Natural killer cell (primary cell): ENCODE measurements at regions of chr2 and their contacts with region 1.

Region 1: DNA sequence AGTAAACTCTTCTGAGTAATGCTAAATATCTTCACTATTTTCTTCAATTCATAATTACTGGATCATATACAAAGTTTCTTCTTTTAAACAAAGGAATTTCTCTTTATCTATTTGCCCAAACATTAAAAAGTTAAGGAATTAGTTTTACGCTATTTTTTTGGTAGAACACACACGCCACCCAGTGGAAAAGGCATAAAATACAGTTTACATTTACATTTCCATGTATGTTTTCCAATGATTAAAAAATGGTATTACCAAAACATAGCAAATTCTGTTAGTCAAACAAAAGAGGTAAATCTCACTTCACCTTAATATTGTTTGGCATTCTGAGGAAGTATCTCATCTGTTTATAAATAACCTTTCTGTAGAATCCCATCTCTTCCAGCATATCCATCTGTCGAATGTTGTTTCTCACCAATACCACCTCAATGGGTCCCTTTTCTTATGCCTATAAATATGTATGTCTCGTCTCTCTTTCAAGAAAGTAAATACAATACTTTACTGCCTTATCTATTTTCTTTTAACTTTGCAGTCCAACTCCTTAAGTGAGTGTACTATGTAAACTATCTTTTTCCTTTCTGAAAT is 7.2 kb downstream of the BOLL start:
- DNase-seq: peak in 1 of 2 donors; percentile 64
- ATAC-seq: no peak
- H3K4me3 ChIP-seq: no peak overlapping the region
- H3K4me3 Mint-ChIP-seq: no peak overlapping the region
- H3K27ac ChIP-seq: no peak overlapping the region
- H3K27ac Mint-ChIP-seq: no peak overlapping the region
- H3K4me1 ChIP-seq: no peaks in the 10 kb centered on the region
- H3K4me1 Mint-ChIP-seq: no peaks in the 10 kb centered on the region
- H3K27me3 ChIP-seq: peaks cover 11% of the 10 kb centered on the region
- H3K27me3 Mint-ChIP-seq: peaks cover 16 to 25% of the 10 kb centered on the region in 2 donors
- CTCF ChIP-seq: peak; percentile 83

Region 2: DNA sequence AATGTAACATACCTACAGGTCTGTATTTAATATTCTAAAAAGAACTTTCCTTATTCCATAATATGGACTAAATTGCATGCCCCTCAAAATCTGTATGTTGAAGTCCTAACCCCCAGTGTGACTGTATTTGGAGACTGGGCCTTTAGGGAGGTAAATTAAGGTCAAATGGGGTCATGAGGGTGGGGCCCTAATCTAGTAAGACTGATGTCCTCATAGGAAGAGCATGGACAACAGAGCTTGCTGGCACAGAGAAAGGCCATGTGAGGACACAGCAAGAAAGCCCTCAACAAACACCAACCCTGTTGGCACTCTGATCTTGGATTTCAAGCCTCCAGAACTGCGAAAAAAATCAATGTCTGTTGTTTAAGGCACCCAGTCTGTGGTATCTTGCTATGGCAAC is 361.6 kb before region 1 on chr2:
- intact Hi-C with region 1: loop called (anchors 10 kb)
- DNase-seq: no peak
- ATAC-seq: no peak
- H3K4me3 ChIP-seq: no peak overlapping the region
- H3K4me3 Mint-ChIP-seq: no peak overlapping the region
- H3K27ac ChIP-seq: no peak overlapping the region
- H3K27ac Mint-ChIP-seq: peak overlapping the region; percentile 11 to 53
- H3K4me1 ChIP-seq: no peaks in the 10 kb centered on the region
- H3K4me1 Mint-ChIP-seq: peaks cover 10 to 15% of the 10 kb centered on the region in 2 donors
- H3K27me3 ChIP-seq: no peaks in the 10 kb centered on the region
- H3K27me3 Mint-ChIP-seq: no peaks in the 10 kb centered on the region
- CTCF ChIP-seq: no peak

Region 3: GRCh38 chr2:198273660-198274059 is 495.7 kb after region 1 on chr2:
- intact Hi-C with region 1: no loop called
- DNase-seq: no peak
- ATAC-seq: no peak
- H3K4me3 ChIP-seq: no peak overlapping the region
- H3K4me3 Mint-ChIP-seq: no peak overlapping the region
- H3K27ac ChIP-seq: no peak overlapping the region
- H3K27ac Mint-ChIP-seq: no peak overlapping the region
- H3K4me1 ChIP-seq: no peaks in the 10 kb centered on the region
- H3K4me1 Mint-ChIP-seq: no peaks in the 10 kb centered on the region
- H3K27me3 ChIP-seq: no peaks in the 10 kb centered on the region
- H3K27me3 Mint-ChIP-seq: peaks cover 5 to 8% of the 10 kb centered on the region in 2 donors
- CTCF ChIP-seq: no peak